ENCODE measurements at regions of chrX and their contacts with region 1.

Region 1: GRCh38 chrX:134020910-134021309 is 35.5 kb upstream of the GPC3 start:
- DNase-seq: peak; percentile 78
- ATAC-seq: peak; percentile 18; the same call in 1 of the 3 replicates
- H3K4me3 ChIP-seq: no peak overlapping the region; a peak in 1 of 6 replicates
- H3K27ac ChIP-seq: peak overlapping the region; percentile 46
- H3K4me1 ChIP-seq: peaks cover 100% of the 10 kb centered on the region
- H3K27me3 ChIP-seq: no peaks in the 10 kb centered on the region
- CTCF ChIP-seq: peak; percentile 68
- EP300 ChIP-seq: no peak
- POLR2A ChIP-seq: no peak
- RAD21 ChIP-seq: peak; percentile 59

Region 2: GRCh38 chrX:133973652-133974335 is 47.1 kb before region 1 on chrX:
- CTCF ChIA-PET with region 1: no interaction called
- POLR2A ChIA-PET with region 1: interaction called, 25 read pairs
- in situ Hi-C with region 1: no loop called
- intact Hi-C with region 1: no loop called
- DNase-seq: no peak
- ATAC-seq: peak; percentile 25
- H3K4me3 ChIP-seq: peak overlapping the region; percentile 19 to 23 (median 21); a peak in 5 of 6 replicates
- H3K27ac ChIP-seq: peak overlapping the region; percentile 43
- H3K4me1 ChIP-seq: peaks cover 82% of the 10 kb centered on the region
- H3K27me3 ChIP-seq: no peaks in the 10 kb centered on the region
- CTCF ChIP-seq: no peak
- EP300 ChIP-seq: no peak
- POLR2A ChIP-seq: no peak; a peak in 1 of 4 replicates
- RAD21 ChIP-seq: no peak

Measured in HepG2 (cell line).